GM12878 (cell line): ENCODE measurements at regions of chr2 and their contacts with region 1.

Region 1: GRCh38 chr2:186862869-186863709 is 14.1 kb upstream of the ZSWIM2 start:
- DNase-seq: no peak
- ATAC-seq: peak; percentile 79
- H3K4me3 ChIP-seq: no peak overlapping the region
- H3K27ac ChIP-seq: no peak overlapping the region
- H3K4me1 ChIP-seq: no peaks in the 10 kb centered on the region
- H3K27me3 ChIP-seq: no peaks in the 10 kb centered on the region
- CTCF ChIP-seq: peak; percentile 35 to 77 (median 48); a peak in 4 of 6 replicates
- EP300 ChIP-seq: no peak
- POLR2A ChIP-seq: no peak
- RAD21 ChIP-seq: peak; percentile 91

Region 2: GRCh38 chr2:186852508-186852907 is 10.6 kb before region 1 on chr2:
- CTCF ChIA-PET with region 1: interaction called, 10 read pairs
- POLR2A ChIA-PET with region 1: no interaction called
- RAD21 ChIA-PET with region 1: interaction called, 4 read pairs
- SMC1A ChIA-PET with region 1: interaction called, 9 read pairs
- in situ Hi-C with region 1: no loop called
- intact Hi-C with region 1: no loop called
- DNase-seq: no peak
- ATAC-seq: no peak
- H3K4me3 ChIP-seq: no peak overlapping the region
- H3K27ac ChIP-seq: no peak overlapping the region
- H3K4me1 ChIP-seq: no peaks in the 10 kb centered on the region; the same call in 1 of the 2 replicates
- H3K27me3 ChIP-seq: peaks cover 0 to 6% of the 10 kb centered on the region in 2 experiments; a peak in 3 of 4 replicates
- CTCF ChIP-seq: no peak
- EP300 ChIP-seq: no peak
- POLR2A ChIP-seq: no peak
- RAD21 ChIP-seq: no peak

Region 3: DNA sequence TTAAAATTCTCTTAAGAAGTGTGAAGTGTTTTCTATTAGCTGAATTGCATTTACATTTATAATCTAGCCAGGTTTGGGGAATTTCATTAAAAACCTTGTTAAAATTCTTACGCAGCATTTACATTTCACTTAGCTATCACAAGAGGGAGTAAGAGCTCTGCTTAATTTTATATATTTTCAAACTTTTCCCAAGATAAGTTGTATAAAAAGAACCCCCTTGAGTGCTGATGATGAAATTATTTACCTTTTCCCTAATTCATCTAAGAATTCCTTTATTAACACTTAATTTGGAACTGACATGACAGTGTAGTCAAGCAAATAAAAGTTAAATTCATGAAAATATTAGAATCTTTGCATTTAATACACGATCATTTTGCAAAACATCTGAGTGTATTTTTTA is 40.1 kb after region 1 on chr2:
- CTCF ChIA-PET with region 1: interaction called, 13 read pairs
- POLR2A ChIA-PET with region 1: no interaction called
- RAD21 ChIA-PET with region 1: interaction called, 28 read pairs
- SMC1A ChIA-PET with region 1: interaction called, 14 read pairs
- in situ Hi-C with region 1: no loop called
- intact Hi-C with region 1: loop called (anchors 5 kb)
- DNase-seq: no peak
- ATAC-seq: no peak
- H3K4me3 ChIP-seq: no peak overlapping the region
- H3K27ac ChIP-seq: no peak overlapping the region
- H3K4me1 ChIP-seq: no peaks in the 10 kb centered on the region
- H3K27me3 ChIP-seq: no peaks in the 10 kb centered on the region
- CTCF ChIP-seq: peak in 2 of 3 experiments; percentile 8 to 34; a peak in 2 of 6 replicates
- EP300 ChIP-seq: no peak
- POLR2A ChIP-seq: no peak
- RAD21 ChIP-seq: peak; percentile 45

Region 4: DNA sequence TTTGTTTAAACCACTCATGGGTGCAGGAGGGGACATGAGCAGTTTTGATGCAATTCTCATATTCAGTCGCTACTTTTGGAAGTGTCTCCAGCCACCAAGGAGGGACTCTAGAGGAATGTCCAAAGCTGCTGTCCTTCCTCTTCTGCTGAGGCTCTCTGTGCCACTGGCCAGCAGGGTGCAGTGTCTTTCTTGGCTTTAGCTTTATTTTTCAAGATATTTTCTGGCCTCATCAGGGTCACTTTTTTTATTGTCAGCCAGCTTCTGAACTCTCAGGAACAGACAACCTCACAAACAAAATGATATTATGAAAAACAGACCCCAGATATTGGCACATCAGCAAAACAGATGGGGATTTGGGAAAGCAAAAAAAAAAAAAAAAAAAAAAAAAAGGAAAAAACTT is 275.2 kb after region 1 on chr2:
- CTCF ChIA-PET with region 1: interaction called, 4 read pairs
- POLR2A ChIA-PET with region 1: no interaction called
- RAD21 ChIA-PET with region 1: interaction called, 7 read pairs
- SMC1A ChIA-PET with region 1: interaction called, 7 read pairs
- in situ Hi-C with region 1: no loop called
- intact Hi-C with region 1: loop called (anchors 2 kb)
- DNase-seq: no peak
- ATAC-seq: peak; percentile 91
- H3K4me3 ChIP-seq: no peak overlapping the region
- H3K27ac ChIP-seq: no peak overlapping the region
- H3K4me1 ChIP-seq: no peaks in the 10 kb centered on the region
- H3K27me3 ChIP-seq: no peaks in the 10 kb centered on the region
- CTCF ChIP-seq: peak; percentile 54 to 67 (median 65)
- EP300 ChIP-seq: no peak
- POLR2A ChIP-seq: no peak
- RAD21 ChIP-seq: peak; percentile 77

Region 5: DNA sequence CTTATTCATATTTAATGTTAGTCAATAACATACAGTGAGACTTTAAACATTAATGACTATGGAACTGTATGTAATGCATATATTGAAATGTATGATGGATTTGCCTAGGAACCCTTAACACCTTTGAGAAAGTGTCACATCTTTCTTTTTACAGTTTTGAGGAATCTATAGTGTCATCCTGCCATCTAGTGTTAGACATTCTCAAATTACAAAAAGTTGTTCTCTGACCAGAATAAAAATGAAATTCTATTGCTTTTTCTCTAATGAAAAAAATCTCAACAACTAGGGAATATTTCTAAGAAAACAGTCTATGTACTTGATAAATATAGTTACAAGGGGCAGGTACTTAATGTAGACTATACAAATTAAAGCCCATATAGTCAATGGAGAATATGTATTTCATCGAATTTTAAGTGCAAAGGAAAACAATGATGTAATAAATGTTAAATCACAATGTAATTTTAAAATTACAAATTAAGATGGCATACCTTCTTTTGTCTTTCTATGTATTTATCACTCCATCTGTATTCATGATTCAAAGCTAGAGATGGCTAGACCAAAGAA is 590.1 kb after region 1 on chr2:
- CTCF ChIA-PET with region 1: interaction called, 103 read pairs
- POLR2A ChIA-PET with region 1: interaction called, 6 read pairs
- RAD21 ChIA-PET with region 1: interaction called, 97 read pairs
- SMC1A ChIA-PET with region 1: interaction called, 58 read pairs
- in situ Hi-C with region 1: loop called (anchors 5 kb)
- intact Hi-C with region 1: loop called (anchors 1 kb)
- DNase-seq: no peak
- ATAC-seq: 0 out of 3 replicates have a peak, but pooled peaks have one; percentile 11
- H3K4me3 ChIP-seq: no peak overlapping the region
- H3K27ac ChIP-seq: no peak overlapping the region
- H3K4me1 ChIP-seq: no peaks in the 10 kb centered on the region
- H3K27me3 ChIP-seq: no peaks in the 10 kb centered on the region
- CTCF ChIP-seq: peak; percentile 8 to 67 (median 27); a peak in 4 of 6 replicates
- EP300 ChIP-seq: no peak
- POLR2A ChIP-seq: no peak
- RAD21 ChIP-seq: peak; percentile 81

Region 6: DNA sequence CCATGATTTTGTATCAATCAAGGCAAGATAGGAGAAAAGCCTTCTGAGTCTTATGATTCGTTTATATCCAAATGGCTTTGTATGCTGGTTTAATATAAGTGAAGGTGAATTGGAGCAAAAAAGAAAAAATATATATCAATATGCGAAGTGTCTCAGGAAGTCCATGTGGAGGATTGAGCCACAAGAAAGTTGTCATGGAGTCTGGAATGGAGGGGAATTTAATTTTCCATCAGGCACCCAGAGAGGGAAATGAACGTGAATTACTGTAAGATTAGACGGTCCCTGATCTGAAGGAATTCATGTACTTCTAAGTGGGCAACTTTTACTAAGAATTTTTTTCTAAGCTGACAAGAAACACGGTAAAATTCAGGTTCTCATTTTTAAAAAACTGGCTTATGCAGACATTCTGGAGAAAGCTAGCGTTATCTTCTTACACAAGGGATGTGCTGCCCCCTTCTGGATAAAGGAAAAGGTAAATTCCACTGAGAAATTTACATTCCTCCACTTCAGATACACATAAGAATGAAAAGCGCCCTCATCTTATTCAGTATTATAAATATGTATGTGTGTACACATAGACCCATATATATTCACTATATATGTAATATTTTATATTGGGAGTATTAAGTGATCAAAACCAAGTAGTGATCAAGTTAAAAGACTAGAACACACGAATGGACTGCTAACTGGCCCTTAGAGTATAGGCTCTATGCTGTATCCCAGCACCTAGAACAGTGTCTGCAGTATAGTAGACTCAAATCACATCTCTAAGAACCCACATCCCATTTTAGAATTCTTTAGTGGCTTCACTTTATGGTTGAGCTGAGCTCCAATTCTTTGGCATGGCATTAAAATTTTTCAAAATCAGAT is 980.1 kb after region 1 on chr2:
- CTCF ChIA-PET with region 1: interaction called, 3 read pairs
- POLR2A ChIA-PET with region 1: no interaction called
- RAD21 ChIA-PET with region 1: interaction called, 3 read pairs
- SMC1A ChIA-PET with region 1: no interaction called
- in situ Hi-C with region 1: loop called (anchors 25 kb)
- intact Hi-C with region 1: no loop called
- DNase-seq: no peak
- ATAC-seq: peak; percentile 79
- H3K4me3 ChIP-seq: no peak overlapping the region
- H3K27ac ChIP-seq: no peak overlapping the region
- H3K4me1 ChIP-seq: no peaks in the 10 kb centered on the region
- H3K27me3 ChIP-seq: no peaks in the 10 kb centered on the region
- CTCF ChIP-seq: peak; percentile 48 to 64 (median 51); a peak in 5 of 6 replicates
- EP300 ChIP-seq: no peak
- POLR2A ChIP-seq: no peak
- RAD21 ChIP-seq: peak; percentile 64